ENCODE measurements at regions of chr6 and their contacts with region 1.

Region 1: GRCh38 chr6:41442800-41443501 is 103.2 kb upstream of the FOXP4 start:
- DNase-seq: peak; percentile 86
- ATAC-seq: peak; percentile 83
- H3K4me3 Mint-ChIP-seq: peak overlapping the region; percentile 60
- H3K27ac Mint-ChIP-seq: 0 out of 2 replicates have a peak overlapping the region, but pooled peaks have one; percentile 66
- H3K4me1 Mint-ChIP-seq: peaks cover 49% of the 10 kb centered on the region
- H3K27me3 Mint-ChIP-seq: peaks cover 54% of the 10 kb centered on the region
- CTCF ChIP-seq: peak; percentile 96

Region 2: DNA sequence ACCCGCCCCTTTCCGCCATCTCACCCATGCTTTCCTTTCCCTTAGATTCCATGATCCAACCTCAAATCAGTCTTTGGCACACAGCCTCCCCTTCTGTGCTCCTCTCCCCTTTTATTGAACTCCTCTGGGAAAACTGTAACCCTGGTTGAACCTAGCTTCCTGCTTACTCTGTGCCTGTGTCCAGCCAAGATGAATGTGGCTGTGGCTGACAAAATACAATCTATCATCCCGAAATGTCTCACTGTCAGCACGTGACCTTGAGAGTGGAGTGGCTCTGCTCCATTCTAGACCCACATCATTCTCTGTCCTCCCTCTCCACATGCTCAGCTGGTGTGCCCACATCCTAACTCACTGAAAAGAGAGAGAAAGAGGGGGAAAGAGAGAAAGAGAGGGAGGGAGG is 96.5 kb before region 1 on chr6:
- CTCF ChIA-PET with region 1: no interaction called
- POLR2A ChIA-PET with region 1: no interaction called
- DNase-seq: no peak
- ATAC-seq: no peak
- H3K4me3 Mint-ChIP-seq: no peak overlapping the region
- H3K27ac Mint-ChIP-seq: no peak overlapping the region
- H3K4me1 Mint-ChIP-seq: no peaks in the 10 kb centered on the region
- H3K27me3 Mint-ChIP-seq: peaks cover 65% of the 10 kb centered on the region
- CTCF ChIP-seq: no peak

Region 3: DNA sequence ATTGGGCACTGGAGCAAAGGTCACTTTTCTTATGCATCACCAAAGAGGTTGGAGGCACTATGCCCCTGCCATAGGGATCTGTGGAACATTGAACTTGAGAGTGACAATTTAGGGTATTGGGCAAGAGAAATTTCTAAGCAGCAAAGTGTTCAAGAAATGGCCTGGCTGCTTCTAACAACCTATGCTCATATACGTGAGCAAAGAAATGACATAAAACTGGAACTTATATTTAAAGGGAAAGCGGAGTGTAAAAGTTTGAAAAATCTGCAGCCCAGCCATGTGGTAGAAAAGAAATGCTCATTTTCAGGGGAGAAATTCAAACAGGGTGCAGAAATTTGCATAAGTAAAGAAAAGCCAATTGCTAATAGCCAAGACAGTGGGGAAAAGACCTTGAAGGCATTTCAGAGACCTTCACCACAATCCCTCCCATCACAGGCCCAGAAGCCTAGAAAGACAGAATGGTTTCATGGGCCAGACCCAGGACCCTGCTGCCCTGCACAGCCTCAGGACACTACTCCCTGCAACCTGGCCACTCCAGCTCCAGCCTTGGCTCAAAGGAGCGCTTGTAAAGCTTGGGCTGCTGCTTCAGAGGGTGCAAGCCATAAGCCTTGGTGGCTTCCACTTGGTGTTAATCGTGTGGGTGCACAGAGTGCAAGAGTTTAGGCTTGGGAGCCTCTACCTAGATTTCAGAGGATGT is 83.2 kb before region 1 on chr6:
- CTCF ChIA-PET with region 1: no interaction called
- POLR2A ChIA-PET with region 1: no interaction called
- DNase-seq: no peak
- ATAC-seq: no peak
- H3K4me3 Mint-ChIP-seq: no peak overlapping the region
- H3K27ac Mint-ChIP-seq: no peak overlapping the region
- H3K4me1 Mint-ChIP-seq: no peaks in the 10 kb centered on the region
- H3K27me3 Mint-ChIP-seq: peaks cover 38% of the 10 kb centered on the region
- CTCF ChIP-seq: no peak

Region 4: DNA sequence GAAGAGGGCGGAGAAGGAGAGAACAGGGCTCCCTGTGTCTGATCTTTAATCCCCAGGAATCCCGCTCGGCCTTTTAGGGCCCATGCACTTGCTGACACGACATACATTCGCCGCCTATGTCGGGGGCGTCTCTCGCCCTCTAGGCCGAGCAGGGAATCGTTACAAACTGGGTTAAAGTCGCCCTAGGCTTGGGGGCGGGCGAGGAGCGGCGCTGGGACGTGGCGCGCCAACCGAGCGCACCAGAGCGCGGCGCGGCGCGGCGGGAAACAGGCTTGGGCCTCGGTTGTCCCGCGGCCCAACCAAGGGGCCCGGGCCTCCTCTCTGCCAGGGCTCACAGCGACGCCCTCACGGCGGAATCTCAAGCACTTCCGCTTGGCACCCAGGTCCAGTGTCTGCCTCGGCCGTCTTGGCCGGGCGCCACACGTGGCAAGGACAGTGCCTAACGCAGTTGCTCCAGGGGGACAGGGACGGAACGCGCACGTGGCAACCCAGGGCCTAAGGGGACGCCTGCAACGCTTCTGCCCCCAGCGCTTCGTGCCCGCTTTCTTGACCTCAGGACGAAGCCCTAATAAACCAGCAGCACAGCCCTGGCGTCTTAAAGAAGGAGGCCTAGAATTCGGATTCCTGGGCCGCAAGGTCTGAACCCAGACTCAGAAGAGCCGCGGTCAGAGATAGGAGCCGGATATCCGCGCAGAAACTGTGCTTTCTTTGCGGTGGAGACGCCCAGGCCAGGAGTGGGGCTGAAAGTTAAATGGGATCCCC is 36.0 kb before region 1 on chr6:
- CTCF ChIA-PET with region 1: interaction called, 17 read pairs
- POLR2A ChIA-PET with region 1: no interaction called
- DNase-seq: peak; percentile 55
- ATAC-seq: peak; percentile 49
- H3K4me3 Mint-ChIP-seq: peak overlapping the region; percentile 55
- H3K27ac Mint-ChIP-seq: no peak overlapping the region
- H3K4me1 Mint-ChIP-seq: peaks cover 34% of the 10 kb centered on the region
- H3K27me3 Mint-ChIP-seq: peaks cover 100% of the 10 kb centered on the region
- CTCF ChIP-seq: no peak

Region 5: DNA sequence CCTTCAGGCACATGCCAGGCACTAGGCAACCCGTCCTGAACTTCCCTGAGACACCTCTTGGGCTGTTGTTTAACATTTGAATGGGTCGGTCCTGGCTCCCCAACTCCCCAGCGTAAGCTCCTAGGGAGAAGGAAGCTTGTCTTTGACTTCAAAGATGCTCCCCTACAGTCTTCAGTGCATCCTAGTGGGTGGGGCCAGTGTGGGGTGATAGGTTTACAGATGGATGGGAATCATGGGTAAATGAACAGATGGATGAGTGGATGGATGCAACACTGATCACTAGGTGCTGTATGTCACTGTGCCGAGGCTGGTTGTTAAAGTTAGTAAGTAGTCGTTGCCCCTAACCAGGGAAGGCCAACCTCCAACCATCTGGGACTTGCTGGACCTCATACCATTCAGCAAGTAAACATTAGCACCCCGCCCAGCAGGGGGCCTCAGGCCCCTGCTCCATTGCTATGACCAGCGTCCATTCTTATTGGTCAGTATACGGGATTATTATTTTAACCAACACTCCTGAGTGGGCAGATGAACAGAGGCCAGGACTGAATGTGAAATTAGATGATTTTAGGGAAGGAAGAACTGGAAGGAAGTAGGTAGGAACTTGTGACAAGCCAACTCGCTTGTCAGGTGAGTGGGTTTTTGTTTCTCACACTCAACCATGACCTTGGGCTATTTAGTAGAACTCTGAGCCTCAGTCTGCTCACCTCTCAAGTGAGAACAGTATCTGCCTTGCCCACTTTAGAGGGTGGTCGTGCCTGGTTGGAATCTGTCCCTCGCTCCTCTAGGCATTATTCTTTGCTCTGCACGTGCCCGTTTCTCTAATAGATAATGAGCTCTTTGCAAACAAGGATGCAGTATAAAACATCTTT is 20.3 kb after region 1 on chr6:
- CTCF ChIA-PET with region 1: interaction called, 40 read pairs
- POLR2A ChIA-PET with region 1: interaction called, 3 read pairs
- DNase-seq: no peak
- ATAC-seq: peak; percentile 80
- H3K4me3 Mint-ChIP-seq: no peak overlapping the region
- H3K27ac Mint-ChIP-seq: no peak overlapping the region
- H3K4me1 Mint-ChIP-seq: peaks cover 25% of the 10 kb centered on the region
- H3K27me3 Mint-ChIP-seq: peaks cover 72% of the 10 kb centered on the region
- CTCF ChIP-seq: no peak

Region 6: GRCh38 chr6:41505122-41506049 is 62.4 kb after region 1 on chr6:
- CTCF ChIA-PET with region 1: interaction called, 13 read pairs
- POLR2A ChIA-PET with region 1: no interaction called
- DNase-seq: peak; percentile 61
- ATAC-seq: peak; percentile 35
- H3K4me3 Mint-ChIP-seq: peak overlapping the region; percentile 64
- H3K27ac Mint-ChIP-seq: no peak overlapping the region
- H3K4me1 Mint-ChIP-seq: peaks cover 29% of the 10 kb centered on the region
- H3K27me3 Mint-ChIP-seq: peaks cover 92% of the 10 kb centered on the region
- CTCF ChIP-seq: no peak

Region 7: DNA sequence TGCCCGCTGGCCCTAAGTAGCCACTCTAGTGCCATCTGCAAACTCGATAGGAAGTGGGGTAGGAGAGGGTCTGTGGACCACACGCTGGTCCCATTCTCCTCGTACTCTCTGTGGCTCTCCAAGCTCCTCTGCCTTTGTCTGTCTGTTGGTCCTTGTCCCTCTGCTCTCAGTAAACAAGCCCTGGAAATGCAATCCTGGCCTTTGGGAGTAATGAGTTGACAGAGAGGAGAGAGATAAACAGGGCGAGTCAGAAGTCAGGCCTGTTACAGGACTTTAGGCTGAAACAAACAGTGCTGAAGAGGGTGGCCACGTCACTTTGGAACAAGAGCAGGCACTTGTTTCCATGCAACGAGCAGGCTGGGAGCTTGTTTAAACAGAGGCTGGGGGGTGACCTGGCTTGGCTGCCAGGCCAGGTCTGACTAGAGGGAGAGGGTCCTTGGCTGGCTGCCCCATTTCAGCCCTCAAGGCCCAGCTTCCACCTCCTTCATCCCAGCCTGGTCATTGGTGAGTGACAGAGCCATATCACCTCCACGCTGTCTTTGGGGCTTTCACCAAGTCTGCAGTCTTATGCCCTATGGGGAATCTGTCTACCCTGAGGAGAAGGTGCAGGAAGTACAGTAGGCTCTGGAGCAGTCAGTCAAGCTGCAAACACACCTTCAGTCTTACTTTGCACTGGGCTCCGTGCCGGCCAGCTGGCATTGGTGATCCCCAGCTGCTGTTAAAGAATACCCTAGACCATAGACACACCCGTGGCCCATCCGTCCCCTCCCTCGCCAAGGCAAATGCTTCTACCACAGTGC is 125.8 kb after region 1 on chr6:
- CTCF ChIA-PET with region 1: interaction called, 14 read pairs
- POLR2A ChIA-PET with region 1: no interaction called
- DNase-seq: peak; percentile 10
- ATAC-seq: no peak
- H3K4me3 Mint-ChIP-seq: no peak overlapping the region
- H3K27ac Mint-ChIP-seq: no peak overlapping the region
- H3K4me1 Mint-ChIP-seq: peaks cover 61% of the 10 kb centered on the region
- H3K27me3 Mint-ChIP-seq: no peaks in the 10 kb centered on the region; the same call in 1 of the 2 replicates
- CTCF ChIP-seq: no peak

Region 8: GRCh38 chr6:41683510-41684310 is 240.8 kb after region 1 on chr6:
- CTCF ChIA-PET with region 1: interaction called, 16 read pairs
- POLR2A ChIA-PET with region 1: no interaction called
- DNase-seq: peak; percentile 82
- ATAC-seq: peak; percentile 50
- H3K4me3 Mint-ChIP-seq: peak overlapping the region; percentile 54
- H3K27ac Mint-ChIP-seq: no peak overlapping the region
- H3K4me1 Mint-ChIP-seq: peaks cover 47% of the 10 kb centered on the region
- H3K27me3 Mint-ChIP-seq: peaks cover 9% of the 10 kb centered on the region
- CTCF ChIP-seq: peak; percentile 86

Measured in WTC11 (cell line).